Activated CD4-positive, alpha-beta T cell treated with anti-CD3 and anti-CD28 coated beads for 36 hours (primary cell): ENCODE measurements at regions of chr10 and their contacts with region 1.

Region 1: DNA sequence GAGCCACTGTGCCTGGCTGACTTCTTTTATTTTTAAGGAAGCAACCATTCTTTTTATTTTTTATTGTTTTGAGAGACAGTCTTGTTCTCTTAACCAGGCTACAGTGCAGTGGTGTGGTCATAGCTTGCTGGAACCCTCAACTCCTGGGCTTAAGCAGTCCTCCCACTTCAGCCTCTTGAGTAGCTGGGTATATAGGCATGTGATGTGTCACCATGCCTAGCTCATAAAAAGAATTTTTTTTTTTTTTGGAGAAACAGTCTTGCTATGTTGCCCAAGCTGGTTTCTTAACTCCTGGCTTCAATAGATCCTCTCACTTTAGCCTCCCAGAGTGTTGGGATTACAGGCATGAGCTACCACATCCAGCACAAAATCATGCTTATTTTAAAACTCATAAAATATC is 5.8 kb downstream of the MCU start:
- DNase-seq: no peak
- ATAC-seq: no peak
- H3K4me3 Mint-ChIP-seq: no peak overlapping the region
- H3K27ac Mint-ChIP-seq: no peak overlapping the region
- H3K4me1 Mint-ChIP-seq: peaks cover 26% of the 10 kb centered on the region
- H3K27me3 Mint-ChIP-seq: no peaks in the 10 kb centered on the region

Region 2: DNA sequence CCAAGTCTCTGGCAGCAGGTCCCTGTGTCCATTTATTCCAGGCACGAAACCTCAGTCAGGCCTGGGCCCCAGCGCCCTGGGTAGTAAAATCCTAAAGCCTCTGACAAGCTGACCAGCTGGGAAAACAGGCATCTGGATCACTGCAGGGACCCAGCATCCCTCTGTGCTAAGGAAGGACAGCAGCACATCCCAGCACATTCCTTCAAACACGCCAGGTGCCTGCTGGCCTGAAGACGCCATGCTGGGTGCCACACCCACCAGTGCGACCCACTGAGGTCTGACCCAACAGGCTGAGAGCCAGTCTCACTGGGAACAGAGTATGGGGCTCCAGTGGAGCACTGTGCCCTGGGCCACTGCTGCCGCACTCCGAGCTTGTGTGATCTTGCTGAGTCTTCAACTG is 349.4 kb before region 1 on chr10:
- CTCF ChIA-PET with region 1: no interaction called
- POLR2A ChIA-PET with region 1: no interaction called
- intact Hi-C with region 1: no loop called
- DNase-seq: no peak
- ATAC-seq: no peak
- H3K4me3 Mint-ChIP-seq: no peak overlapping the region
- H3K27ac Mint-ChIP-seq: no peak overlapping the region
- H3K4me1 Mint-ChIP-seq: peaks cover 28% of the 10 kb centered on the region
- H3K27me3 Mint-ChIP-seq: no peaks in the 10 kb centered on the region

Region 3: GRCh38 chr10:72449915-72450441 is 247.7 kb before region 1 on chr10:
- CTCF ChIA-PET with region 1: no interaction called
- POLR2A ChIA-PET with region 1: no interaction called
- intact Hi-C with region 1: no loop called
- DNase-seq: no peak
- ATAC-seq: no peak
- H3K4me3 Mint-ChIP-seq: no peak overlapping the region
- H3K27ac Mint-ChIP-seq: no peak overlapping the region
- H3K4me1 Mint-ChIP-seq: no peaks in the 10 kb centered on the region
- H3K27me3 Mint-ChIP-seq: no peaks in the 10 kb centered on the region

Region 4: DNA sequence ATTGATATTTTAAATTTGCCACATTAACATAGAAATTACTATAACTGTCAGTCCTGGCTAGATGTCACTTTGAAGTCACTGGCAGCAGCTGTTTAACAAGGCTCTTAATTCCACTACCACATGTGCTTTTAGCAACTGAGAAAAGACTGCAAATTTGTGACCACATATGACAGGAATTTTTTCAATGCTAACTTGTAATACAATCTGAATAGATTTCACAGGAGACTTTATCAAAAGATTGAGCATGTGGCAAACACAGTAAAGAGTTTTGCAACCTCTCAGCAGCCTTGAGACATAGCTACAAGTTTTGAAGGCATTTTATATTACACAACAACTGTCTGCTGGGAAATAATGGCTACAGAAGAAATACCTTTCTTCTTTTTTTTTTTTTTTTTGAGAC is 144.9 kb before region 1 on chr10:
- CTCF ChIA-PET with region 1: no interaction called
- POLR2A ChIA-PET with region 1: interaction called, 10 read pairs
- intact Hi-C with region 1: no loop called
- DNase-seq: no peak
- ATAC-seq: no peak
- H3K4me3 Mint-ChIP-seq: no peak overlapping the region
- H3K27ac Mint-ChIP-seq: no peak overlapping the region
- H3K4me1 Mint-ChIP-seq: no peaks in the 10 kb centered on the region
- H3K27me3 Mint-ChIP-seq: no peaks in the 10 kb centered on the region